Naive thymus-derived CD4-positive, alpha-beta T cell (primary cell): ENCODE measurements at regions of chr13 and their contacts with region 1.

Region 1: DNA sequence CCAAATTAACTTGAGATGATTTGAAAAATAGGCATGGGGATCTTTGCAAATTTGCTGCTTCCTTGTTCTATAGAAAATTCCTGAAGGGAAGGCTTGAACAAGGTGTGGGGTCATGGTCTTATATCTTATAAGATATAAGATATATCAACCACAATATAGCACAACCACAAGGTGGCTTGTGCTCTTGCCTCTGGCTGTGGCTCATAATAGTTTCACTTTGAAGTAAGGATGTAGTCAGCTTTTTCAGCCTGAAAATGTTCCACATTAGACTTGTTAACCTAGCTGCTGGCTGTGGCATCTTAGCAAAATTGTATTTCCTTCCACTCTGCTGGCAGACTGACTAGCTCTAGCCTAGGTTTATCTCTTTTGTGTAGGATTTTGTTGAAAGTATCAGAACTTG is 169.7 kb downstream of the KLF5 start:
- DNase-seq: peak in 8 of 9 donors; percentile 26 to 62 (median 48)
- ATAC-seq: peak; percentile 67
- H3K4me3 ChIP-seq: no peak overlapping the region
- H3K4me3 Mint-ChIP-seq: peak overlapping the region in 5 of 10 donors; percentile 16 to 49 (median 44)
- H3K27ac ChIP-seq: no peak overlapping the region
- H3K27ac Mint-ChIP-seq: peak overlapping the region in 8 of 9 donors; percentile 41 to 79 (median 62)
- H3K4me1 ChIP-seq: peaks cover 6 to 28% of the 10 kb centered on the region in 2 donors
- H3K4me1 Mint-ChIP-seq: peaks cover 31 to 63% (median 52%) of the 10 kb centered on the region in 7 donors
- H3K27me3 ChIP-seq: no peaks in the 10 kb centered on the region
- H3K27me3 Mint-ChIP-seq: peaks cover 0 to 3% (median 0%) of the 10 kb centered on the region in 5 donors

Region 2: GRCh38 chr13:71964491-71965100 is 1264.0 kb before region 1 on chr13:
- CTCF ChIA-PET with region 1: no interaction called
- POLR2A ChIA-PET with region 1: no interaction called
- intact Hi-C with region 1: no loop called
- DNase-seq: no peak
- ATAC-seq: no peak
- H3K4me3 ChIP-seq: peak overlapping the region; percentile 6
- H3K4me3 Mint-ChIP-seq: peak overlapping the region in 8 of 10 donors; percentile 14 to 77 (median 68)
- H3K27ac ChIP-seq: no peak overlapping the region
- H3K27ac Mint-ChIP-seq: no peak overlapping the region
- H3K4me1 ChIP-seq: no peaks in the 10 kb centered on the region
- H3K4me1 Mint-ChIP-seq: peaks cover 0 to 5% (median 0%) of the 10 kb centered on the region in 7 donors
- H3K27me3 ChIP-seq: no peaks in the 10 kb centered on the region
- H3K27me3 Mint-ChIP-seq: no peaks in the 10 kb centered on the region

Region 3: DNA sequence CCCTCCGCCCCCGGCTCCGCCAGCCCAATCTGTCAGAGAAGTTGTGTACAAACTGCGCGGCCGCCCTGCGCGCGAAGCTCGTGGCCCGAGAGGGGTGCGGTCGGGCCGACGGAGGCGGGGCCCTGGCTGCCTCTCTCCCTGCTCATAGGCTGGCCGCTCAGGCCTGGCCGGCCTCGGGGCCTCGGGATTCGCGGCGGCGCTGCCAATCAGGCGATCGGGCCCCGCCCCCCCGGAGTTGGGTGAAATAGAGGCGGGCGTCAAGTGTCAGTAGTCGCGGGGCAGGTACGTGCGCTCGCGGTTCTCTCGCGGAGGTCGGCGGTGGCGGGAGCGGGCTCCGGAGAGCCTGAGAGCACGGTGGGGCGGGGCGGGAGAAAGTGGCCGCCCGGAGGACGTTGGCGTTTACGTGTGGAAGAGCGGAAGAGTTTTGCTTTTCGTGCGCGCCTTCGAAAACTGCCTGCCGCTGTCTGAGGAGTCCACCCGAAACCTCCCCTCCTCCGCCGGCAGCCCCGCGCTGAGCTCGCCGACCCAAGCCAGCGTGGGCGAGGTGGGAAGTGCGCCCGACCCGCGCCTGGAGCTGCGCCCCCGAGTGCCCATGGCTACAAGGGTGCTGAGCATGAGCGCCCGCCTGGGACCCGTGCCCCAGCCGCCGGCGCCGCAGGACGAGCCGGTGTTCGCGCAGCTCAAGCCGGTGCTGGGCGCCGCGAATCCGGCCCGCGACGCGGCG is 169.6 kb before region 1 on chr13 and contains the start of gene KLF5:
- CTCF ChIA-PET with region 1: no interaction called
- POLR2A ChIA-PET with region 1: no interaction called
- intact Hi-C with region 1: loop called (anchors 2 to 5 kb)
- DNase-seq: peak; percentile 93 to 98 (median 94)
- ATAC-seq: peak; percentile 98
- H3K4me3 ChIP-seq: peak within 1 kb of the TSS; percentile 58
- H3K4me3 Mint-ChIP-seq: peak within 1 kb of the TSS; percentile 82 to 94 (median 90)
- H3K27ac ChIP-seq: peak within 1 kb of the TSS; percentile 42
- H3K27ac Mint-ChIP-seq: peak within 1 kb of the TSS; percentile 38 to 92 (median 79)
- H3K4me1 ChIP-seq: peaks cover 4 to 10% of the 10 kb centered on the region in 2 donors
- H3K4me1 Mint-ChIP-seq: peaks cover 6 to 32% (median 23%) of the 10 kb centered on the region in 7 donors
- H3K27me3 ChIP-seq: peaks cover 5 to 10% of the 10 kb centered on the region in 2 donors
- H3K27me3 Mint-ChIP-seq: peaks cover 19 to 58% (median 40%) of the 10 kb centered on the region in 5 donors
- total RNA-seq, gene KLF5: 3.6 to 13.3 (median 5.7) TPM

Region 4: DNA sequence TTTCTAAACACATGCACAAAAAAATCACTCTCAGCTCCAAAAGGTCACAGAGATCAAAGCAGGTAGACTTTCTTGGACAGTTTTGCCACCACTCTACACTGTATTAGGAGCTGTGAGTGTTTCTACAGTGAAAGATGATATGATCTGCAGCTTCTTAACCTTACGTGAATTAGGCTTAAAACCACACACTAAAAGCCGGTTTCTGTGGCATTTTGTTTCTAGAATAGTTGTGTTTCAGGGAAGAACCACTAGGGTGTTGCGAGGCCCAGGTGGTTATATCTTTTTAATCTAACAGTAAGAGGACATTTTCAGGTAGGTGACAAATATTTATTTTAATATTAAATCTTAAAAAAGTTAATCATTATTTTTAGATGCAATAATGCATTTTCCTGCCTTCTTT is 46.6 kb after region 1 on chr13:
- CTCF ChIA-PET with region 1: no interaction called
- POLR2A ChIA-PET with region 1: no interaction called
- intact Hi-C with region 1: loop called in 1 of 2 experiments (anchors 1 kb)
- DNase-seq: peak in 1 of 9 donors; percentile 7
- ATAC-seq: no peak
- H3K4me3 ChIP-seq: no peak overlapping the region
- H3K4me3 Mint-ChIP-seq: peak overlapping the region in 4 of 10 donors; percentile 9 to 51 (median 15)
- H3K27ac ChIP-seq: no peak overlapping the region
- H3K27ac Mint-ChIP-seq: peak overlapping the region in 2 of 9 donors; percentile 47 to 64
- H3K4me1 ChIP-seq: peaks cover 0 to 3% of the 10 kb centered on the region in 2 donors
- H3K4me1 Mint-ChIP-seq: peaks cover 0 to 45% (median 14%) of the 10 kb centered on the region in 7 donors
- H3K27me3 ChIP-seq: no peaks in the 10 kb centered on the region
- H3K27me3 Mint-ChIP-seq: no peaks in the 10 kb centered on the region

Region 5: GRCh38 chr13:73417015-73417623 is 188.6 kb after region 1 on chr13:
- CTCF ChIA-PET with region 1: no interaction called
- POLR2A ChIA-PET with region 1: no interaction called
- intact Hi-C with region 1: loop called (anchors 2 to 10 kb)
- DNase-seq: peak in 1 of 9 donors; percentile 1
- ATAC-seq: no peak
- H3K4me3 ChIP-seq: no peak overlapping the region
- H3K4me3 Mint-ChIP-seq: no peak overlapping the region
- H3K27ac ChIP-seq: no peak overlapping the region
- H3K27ac Mint-ChIP-seq: peak overlapping the region in 1 of 9 donors; percentile 21
- H3K4me1 ChIP-seq: no peaks in the 10 kb centered on the region
- H3K4me1 Mint-ChIP-seq: no peaks in the 10 kb centered on the region
- H3K27me3 ChIP-seq: no peaks in the 10 kb centered on the region
- H3K27me3 Mint-ChIP-seq: no peaks in the 10 kb centered on the region

Region 6: GRCh38 chr13:73521290-73521624 is 292.7 kb after region 1 on chr13:
- CTCF ChIA-PET with region 1: no interaction called
- POLR2A ChIA-PET with region 1: no interaction called
- intact Hi-C with region 1: loop called in 1 of 2 experiments (anchors 2 kb)
- DNase-seq: peak in 6 of 9 donors; percentile 35 to 57 (median 52)
- ATAC-seq: peak; percentile 79
- H3K4me3 ChIP-seq: peak overlapping the region; percentile 59
- H3K4me3 Mint-ChIP-seq: peak overlapping the region; percentile 82 to 93 (median 88)
- H3K27ac ChIP-seq: peak overlapping the region; percentile 71
- H3K27ac Mint-ChIP-seq: peak overlapping the region; percentile 89 to 99 (median 97)
- H3K4me1 ChIP-seq: peaks cover 0 to 13% of the 10 kb centered on the region in 2 donors
- H3K4me1 Mint-ChIP-seq: peaks cover 9 to 32% (median 25%) of the 10 kb centered on the region in 7 donors
- H3K27me3 ChIP-seq: no peaks in the 10 kb centered on the region
- H3K27me3 Mint-ChIP-seq: peaks cover 0 to 3% (median 0%) of the 10 kb centered on the region in 5 donors

Region 7: DNA sequence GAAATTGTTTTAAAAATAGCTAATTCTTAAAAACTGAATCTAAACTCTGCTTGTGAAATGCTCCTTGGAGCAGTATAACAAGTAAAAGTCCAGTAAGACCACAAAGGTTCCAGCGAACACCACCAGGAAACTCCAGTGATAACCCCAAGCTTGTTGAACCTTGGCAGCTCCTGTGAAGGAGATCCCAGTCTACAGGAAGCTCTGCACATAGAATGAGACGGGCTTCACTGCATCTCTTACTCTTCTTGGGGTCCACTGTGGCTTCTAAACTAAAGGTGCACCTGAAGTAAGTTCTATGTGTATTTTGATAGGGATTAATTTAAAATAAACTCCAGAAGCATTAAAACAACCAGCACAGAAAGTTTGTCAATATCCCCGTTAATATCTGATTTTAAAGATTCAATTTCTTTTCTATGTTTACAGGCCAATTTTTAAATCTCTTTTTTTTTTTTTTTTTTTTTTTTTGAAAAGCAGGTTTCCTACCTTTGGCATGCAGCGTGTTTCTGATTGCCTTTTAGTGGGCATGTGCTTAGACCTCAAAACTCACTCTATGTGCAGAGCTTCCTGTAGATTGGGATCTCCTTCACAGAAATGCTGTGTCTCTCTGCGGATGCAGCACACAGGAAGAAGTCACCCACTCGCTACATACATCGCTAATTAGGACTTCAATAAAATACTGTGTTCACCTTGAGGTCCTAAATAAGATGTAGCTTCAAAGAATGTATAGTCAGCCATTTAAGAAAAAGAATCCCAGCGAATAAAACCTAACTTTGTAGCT is 397.2 kb after region 1 on chr13:
- CTCF ChIA-PET with region 1: no interaction called
- POLR2A ChIA-PET with region 1: no interaction called
- intact Hi-C with region 1: loop called (anchors 2 to 5 kb)
- DNase-seq: peak in 7 of 9 donors; percentile 31 to 80 (median 66)
- ATAC-seq: peak; percentile 90
- H3K4me3 ChIP-seq: no peak overlapping the region
- H3K4me3 Mint-ChIP-seq: peak overlapping the region; percentile 51 to 79 (median 74)
- H3K27ac ChIP-seq: no peak overlapping the region
- H3K27ac Mint-ChIP-seq: peak overlapping the region; percentile 62 to 91 (median 84)
- H3K4me1 ChIP-seq: peaks cover 13 to 32% of the 10 kb centered on the region in 2 donors
- H3K4me1 Mint-ChIP-seq: peaks cover 14 to 63% (median 54%) of the 10 kb centered on the region in 7 donors
- H3K27me3 ChIP-seq: no peaks in the 10 kb centered on the region
- H3K27me3 Mint-ChIP-seq: no peaks in the 10 kb centered on the region

Region 8: GRCh38 chr13:75219479-75220237 is 1991.1 kb after region 1 on chr13:
- CTCF ChIA-PET with region 1: no interaction called
- POLR2A ChIA-PET with region 1: no interaction called
- intact Hi-C with region 1: loop called (anchors 1 to 10 kb)
- DNase-seq: peak; percentile 67 to 87 (median 79)
- ATAC-seq: peak; percentile 96
- H3K4me3 ChIP-seq: no peak overlapping the region
- H3K4me3 Mint-ChIP-seq: peak overlapping the region; percentile 28 to 77 (median 58)
- H3K27ac ChIP-seq: no peak overlapping the region
- H3K27ac Mint-ChIP-seq: peak overlapping the region in 2 of 9 donors; percentile 34 to 87
- H3K4me1 ChIP-seq: peaks cover 0 to 4% of the 10 kb centered on the region in 2 donors
- H3K4me1 Mint-ChIP-seq: peaks cover 6 to 7% (median 7%) of the 10 kb centered on the region in 7 donors
- H3K27me3 ChIP-seq: no peaks in the 10 kb centered on the region
- H3K27me3 Mint-ChIP-seq: peaks cover 15 to 48% (median 27%) of the 10 kb centered on the region in 5 donors